ENCODE measurements at regions of chr2 and their contacts with region 1.

Region 1: DNA sequence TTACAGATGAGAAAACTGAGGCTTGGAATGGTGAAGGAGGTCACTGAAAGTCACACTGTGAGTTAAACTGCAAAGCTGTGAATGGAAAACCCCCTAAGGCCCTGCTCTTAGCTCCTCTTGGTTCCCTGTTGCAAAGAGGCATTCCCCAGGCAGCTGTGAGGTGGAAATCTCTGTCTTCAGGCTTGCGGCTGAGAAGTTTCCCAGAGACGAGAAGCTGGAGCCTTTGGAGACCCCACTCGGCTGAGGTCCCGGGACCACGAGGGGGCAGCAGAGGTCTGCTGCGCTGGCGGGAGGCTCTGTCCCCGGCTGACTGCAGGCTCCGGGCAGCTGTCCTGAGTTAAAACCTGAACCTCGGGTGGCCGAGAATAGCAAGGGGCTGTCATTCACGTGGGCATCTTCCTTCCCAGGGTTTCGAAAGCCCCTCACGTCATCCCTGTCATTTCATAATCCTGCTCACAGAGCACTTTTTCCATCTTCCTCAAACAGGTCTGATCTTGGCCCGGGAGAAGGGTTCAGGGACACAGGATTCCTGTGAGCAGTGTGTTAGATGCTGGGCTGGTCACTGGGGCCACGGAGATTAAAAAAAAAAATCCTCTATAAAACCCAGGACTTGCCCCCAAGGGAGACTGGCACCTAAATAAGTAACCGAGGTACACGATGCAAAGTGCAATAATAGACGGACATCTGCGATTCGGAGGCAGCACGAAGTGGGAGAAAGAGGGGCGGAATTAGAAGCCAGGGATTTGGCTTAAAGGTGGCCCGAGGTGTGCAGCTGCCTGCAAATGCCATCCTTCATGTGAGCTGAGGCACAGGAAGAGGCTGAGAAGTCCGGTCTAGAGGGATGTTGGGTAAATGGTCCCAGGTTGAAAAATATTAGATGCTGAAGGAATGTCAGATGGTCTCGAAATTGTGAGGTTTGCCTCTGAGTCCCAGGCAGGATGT is 24.6 kb upstream of the ATOH8 start:
- DNase-seq: peak; percentile 73
- H3K4me3 Mint-ChIP-seq: no peak overlapping the region
- H3K27ac Mint-ChIP-seq: no peak overlapping the region
- H3K4me1 Mint-ChIP-seq: peaks cover 6% of the 10 kb centered on the region
- H3K27me3 Mint-ChIP-seq: peaks cover 15% of the 10 kb centered on the region

Region 2: DNA sequence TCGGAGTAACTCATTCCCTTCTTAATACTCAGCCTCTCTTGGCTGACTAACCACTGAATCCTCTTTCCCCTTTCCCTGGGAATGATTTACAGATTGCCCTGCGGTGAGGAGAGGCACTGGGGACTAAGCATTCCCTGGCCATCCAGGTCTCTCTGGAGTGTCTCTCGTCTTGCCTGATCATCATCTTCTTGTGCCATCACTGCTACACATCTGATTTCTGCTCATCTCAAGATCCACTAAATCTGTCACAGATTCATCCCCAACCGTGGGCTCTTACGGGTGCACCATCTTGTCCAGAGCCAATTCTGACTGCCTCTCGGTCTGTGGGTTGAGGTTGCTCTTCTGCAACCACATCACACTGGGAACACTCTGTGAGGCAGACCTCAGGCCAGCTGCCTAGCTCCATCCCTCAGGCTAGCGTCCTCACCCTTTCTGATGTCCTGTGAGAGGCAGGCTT is 73.2 kb before region 1 on chr2:
- CTCF ChIA-PET with region 1: no interaction called
- POLR2A ChIA-PET with region 1: no interaction called
- DNase-seq: no peak
- H3K4me3 Mint-ChIP-seq: no peak overlapping the region
- H3K27ac Mint-ChIP-seq: no peak overlapping the region
- H3K4me1 Mint-ChIP-seq: no peaks in the 10 kb centered on the region
- H3K27me3 Mint-ChIP-seq: no peaks in the 10 kb centered on the region

Region 3: DNA sequence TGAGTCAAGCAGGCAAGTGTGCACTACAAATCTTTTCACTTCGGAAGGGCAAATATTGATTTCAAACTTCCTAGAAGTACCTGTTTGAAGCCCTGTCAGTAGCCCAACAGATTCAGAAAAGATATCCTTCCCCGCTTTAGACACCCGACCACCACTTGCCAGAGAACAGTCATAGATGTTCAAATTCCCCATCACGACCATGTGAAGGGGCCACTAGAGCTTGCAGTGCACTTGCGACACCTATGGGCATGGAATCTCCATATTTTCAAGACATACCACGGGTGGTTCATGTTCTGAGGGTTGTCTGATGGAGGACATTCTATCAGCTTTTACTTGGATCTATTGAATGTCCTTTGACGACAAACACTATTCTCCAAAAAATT is 11.2 kb before region 1 on chr2:
- CTCF ChIA-PET with region 1: interaction called, 12 read pairs
- POLR2A ChIA-PET with region 1: no interaction called
- DNase-seq: no peak
- H3K4me3 Mint-ChIP-seq: no peak overlapping the region
- H3K27ac Mint-ChIP-seq: no peak overlapping the region
- H3K4me1 Mint-ChIP-seq: peaks cover 26% of the 10 kb centered on the region
- H3K27me3 Mint-ChIP-seq: peaks cover 6% of the 10 kb centered on the region

Region 4: DNA sequence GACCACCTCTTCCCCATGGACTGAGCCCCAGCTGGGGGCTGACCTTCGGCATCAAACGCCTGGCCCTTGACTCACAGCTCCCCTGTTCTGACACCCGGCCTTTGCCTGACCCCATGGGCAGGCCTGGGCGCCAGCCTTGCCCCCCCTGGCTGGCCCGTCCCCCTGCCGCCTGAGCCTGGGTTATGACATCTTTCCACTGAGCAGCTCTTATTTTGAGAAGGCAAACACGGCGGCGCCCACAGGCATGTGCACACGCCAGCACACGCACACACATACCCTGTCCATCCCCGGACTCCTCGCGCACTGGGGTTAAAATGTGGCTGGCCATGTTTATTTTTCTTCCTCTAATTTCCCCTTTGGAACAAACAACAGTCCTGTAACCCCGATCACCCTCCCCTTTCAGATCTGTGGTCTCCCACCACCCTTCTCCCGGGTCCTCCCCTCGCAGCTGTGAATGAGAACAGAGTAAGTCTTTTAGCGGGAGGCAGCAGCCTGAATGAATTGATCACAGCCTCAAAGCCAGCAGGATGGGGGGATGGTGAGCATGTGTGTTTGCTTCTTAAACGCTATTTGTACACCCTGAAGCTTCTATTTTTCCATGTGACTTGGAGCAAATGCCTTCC is 12.8 kb after region 1 on chr2:
- CTCF ChIA-PET with region 1: interaction called, 13 read pairs
- POLR2A ChIA-PET with region 1: no interaction called
- DNase-seq: no peak
- H3K4me3 Mint-ChIP-seq: no peak overlapping the region
- H3K27ac Mint-ChIP-seq: no peak overlapping the region
- H3K4me1 Mint-ChIP-seq: no peaks in the 10 kb centered on the region
- H3K27me3 Mint-ChIP-seq: peaks cover 59% of the 10 kb centered on the region